Endothelial cell of umbilical vein (primary cell): ENCODE measurements at regions of chr3 and their contacts with region 1.

Region 1: GRCh38 chr3:157201648-157202278 is 41.8 kb upstream of the CCNL1 start:
- DNase-seq: peak; percentile 63
- H3K4me3 ChIP-seq: no peak overlapping the region
- H3K27ac ChIP-seq: no peak overlapping the region
- H3K4me1 ChIP-seq: peaks cover 14% of the 10 kb centered on the region
- H3K27me3 ChIP-seq: no peaks in the 10 kb centered on the region
- CTCF ChIP-seq: peak; percentile 40 to 41
- POLR2A ChIP-seq: no peak

Region 2: DNA sequence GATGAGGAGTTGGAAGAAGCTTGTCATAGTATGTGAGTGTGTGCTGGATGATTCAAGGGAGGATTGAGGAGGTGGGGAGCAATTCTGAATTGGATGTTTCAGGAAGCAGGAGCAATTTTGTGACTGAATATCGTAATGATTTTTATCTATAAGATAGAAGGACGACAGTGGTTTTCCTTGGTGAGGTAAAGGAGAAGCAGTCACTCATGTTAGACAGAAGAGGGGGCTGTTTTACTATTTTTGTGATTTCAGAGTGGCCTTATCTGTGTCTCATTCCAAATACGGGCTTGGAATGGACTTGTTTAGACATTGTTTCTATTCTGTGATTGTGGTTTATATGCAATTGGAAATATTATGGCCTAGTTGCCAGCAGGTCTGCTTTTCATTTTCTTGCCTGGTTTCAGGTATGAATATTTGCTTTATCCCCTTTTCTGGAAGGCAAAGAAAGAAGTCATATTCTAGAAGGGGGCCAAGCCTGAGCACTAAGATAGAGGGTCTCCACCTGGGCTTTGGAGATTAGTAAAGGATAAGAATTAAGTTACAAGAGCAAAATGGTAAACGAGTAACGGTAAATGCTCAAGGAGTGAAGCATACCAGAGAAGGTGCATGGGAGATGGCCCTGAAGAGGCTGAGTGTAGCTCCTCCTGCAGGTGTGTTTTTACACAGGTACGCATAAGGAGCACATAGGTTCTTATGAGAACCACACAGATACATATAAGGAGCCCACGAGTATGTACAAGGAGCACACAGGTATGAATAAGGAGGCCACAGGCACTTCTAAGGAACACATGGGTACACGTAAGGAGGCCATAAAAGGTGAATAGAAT is 1206.0 kb before region 1 on chr3:
- CTCF ChIA-PET with region 1: interaction called, 16 read pairs
- POLR2A ChIA-PET with region 1: no interaction called
- dilution Hi-C with region 1: no loop called
- intact Hi-C with region 1: loop called (anchors 5 kb)
- DNase-seq: peak; percentile 43
- H3K4me3 ChIP-seq: no peak overlapping the region
- H3K27ac ChIP-seq: no peak overlapping the region
- H3K4me1 ChIP-seq: no peaks in the 10 kb centered on the region
- H3K27me3 ChIP-seq: peaks cover 0 to 2% of the 10 kb centered on the region in 2 experiments
- CTCF ChIP-seq: peak; percentile 34 to 38
- POLR2A ChIP-seq: no peak

Region 3: GRCh38 chr3:157064402-157064801 is 137.4 kb before region 1 on chr3:
- CTCF ChIA-PET with region 1: no interaction called
- POLR2A ChIA-PET with region 1: no interaction called
- dilution Hi-C with region 1: no loop called
- intact Hi-C with region 1: no loop called
- DNase-seq: no peak
- H3K4me3 ChIP-seq: no peak overlapping the region
- H3K27ac ChIP-seq: no peak overlapping the region
- H3K4me1 ChIP-seq: no peaks in the 10 kb centered on the region
- H3K27me3 ChIP-seq: peaks cover 2 to 7% of the 10 kb centered on the region in 2 experiments
- CTCF ChIP-seq: no peak
- POLR2A ChIP-seq: no peak

Region 4: DNA sequence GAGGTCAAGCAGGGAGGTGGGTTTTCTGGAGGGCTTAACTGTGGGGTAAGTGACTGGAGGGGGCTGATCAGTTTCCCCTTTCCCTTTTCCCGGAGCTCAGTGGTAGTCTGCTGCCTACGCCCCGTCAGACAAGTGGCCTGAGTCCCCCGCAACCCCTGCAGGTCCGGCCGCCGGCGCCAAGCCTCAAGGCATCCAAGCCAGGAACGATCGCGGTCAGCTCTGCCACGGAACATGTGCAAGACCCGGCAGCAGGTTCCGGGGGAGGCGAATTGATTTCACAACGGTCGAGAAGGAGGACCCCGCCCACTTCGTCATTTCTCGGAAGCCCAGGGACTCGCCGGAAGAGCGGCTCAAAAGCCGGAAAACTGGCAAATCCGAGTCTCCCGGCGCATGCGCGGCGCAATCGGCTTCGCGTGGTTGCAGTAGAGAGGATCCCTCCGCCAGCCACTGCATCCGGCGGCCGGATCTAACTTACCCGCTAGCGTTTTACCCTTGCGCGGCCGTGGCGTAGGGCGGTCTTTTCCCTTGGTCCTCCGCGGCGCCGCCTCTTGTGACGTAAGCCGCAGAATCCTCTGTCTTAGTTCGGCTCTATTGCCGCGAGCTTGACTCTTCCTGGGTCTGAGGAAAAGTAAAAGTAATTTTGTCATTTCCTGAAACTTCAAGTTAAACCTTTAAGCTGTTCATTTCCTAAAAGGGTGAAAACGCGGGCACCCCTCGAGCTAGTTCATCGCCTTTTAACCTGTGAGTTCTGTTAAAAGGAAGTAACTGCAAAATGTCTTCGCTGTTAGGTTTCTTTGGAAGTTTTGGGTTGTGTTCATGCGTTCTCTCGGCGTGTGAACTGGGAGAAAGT is 26.9 kb before region 1 on chr3:
- CTCF ChIA-PET with region 1: interaction called, 39 read pairs
- POLR2A ChIA-PET with region 1: interaction called, 3 read pairs
- dilution Hi-C with region 1: no loop called
- intact Hi-C with region 1: loop called (anchors 1 kb)
- DNase-seq: peak; percentile 99
- H3K4me3 ChIP-seq: peak overlapping the region; percentile 37 to 97 (median 90)
- H3K27ac ChIP-seq: peak overlapping the region; percentile 98
- H3K4me1 ChIP-seq: peaks cover 16% of the 10 kb centered on the region
- H3K27me3 ChIP-seq: no peaks in the 10 kb centered on the region
- CTCF ChIP-seq: no peak
- POLR2A ChIP-seq: peak; percentile 95

Region 5: DNA sequence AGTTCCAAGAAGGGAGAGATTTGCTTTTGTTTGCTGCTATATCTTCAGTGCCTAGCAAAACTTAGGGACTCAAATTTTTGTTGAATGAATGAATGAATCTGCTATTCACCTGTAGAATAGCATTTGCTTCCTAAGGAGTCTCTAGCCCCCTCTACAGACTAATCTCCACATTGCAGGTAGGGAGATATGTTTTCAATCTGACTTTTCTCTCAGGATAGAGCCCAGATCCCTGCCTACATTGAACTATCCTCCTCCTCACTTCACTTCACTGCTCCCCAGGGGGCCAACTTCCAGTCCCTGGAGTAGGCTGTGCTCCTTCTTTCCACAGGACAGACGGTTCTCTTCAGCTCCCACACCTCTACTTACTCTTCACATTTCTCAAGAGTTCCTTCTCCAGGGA is 153.0 kb after region 1 on chr3:
- CTCF ChIA-PET with region 1: interaction called, 52 read pairs
- POLR2A ChIA-PET with region 1: no interaction called
- dilution Hi-C with region 1: no loop called
- intact Hi-C with region 1: loop called (anchors 1 kb)
- DNase-seq: peak; percentile 64
- H3K4me3 ChIP-seq: no peak overlapping the region
- H3K27ac ChIP-seq: peak overlapping the region; percentile 8
- H3K4me1 ChIP-seq: peaks cover 41% of the 10 kb centered on the region
- H3K27me3 ChIP-seq: no peaks in the 10 kb centered on the region
- CTCF ChIP-seq: peak; percentile 47 to 62
- POLR2A ChIP-seq: no peak

Region 6: DNA sequence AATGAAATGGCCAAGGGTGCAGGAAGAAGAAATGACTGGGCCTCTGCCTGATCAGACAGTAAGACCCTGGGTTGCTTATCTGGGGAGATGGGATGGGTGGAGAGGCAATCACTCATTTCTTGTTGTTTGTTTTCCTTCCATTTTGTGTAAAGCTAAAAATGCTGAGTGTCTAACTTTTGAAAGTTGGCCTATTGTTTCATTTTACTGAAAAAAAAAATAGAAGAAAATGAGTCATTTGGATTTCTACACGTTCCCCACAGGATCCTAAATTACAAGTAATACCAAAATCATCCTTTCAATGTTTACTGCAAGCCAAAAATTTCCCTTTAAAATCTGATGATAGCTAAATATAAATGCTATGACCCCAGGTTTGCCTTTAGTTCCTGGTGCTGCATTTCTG is 265.4 kb after region 1 on chr3:
- CTCF ChIA-PET with region 1: interaction called, 12 read pairs
- POLR2A ChIA-PET with region 1: no interaction called
- dilution Hi-C with region 1: no loop called
- intact Hi-C with region 1: no loop called
- DNase-seq: peak; percentile 79
- H3K4me3 ChIP-seq: no peak overlapping the region
- H3K27ac ChIP-seq: peak overlapping the region; percentile 47
- H3K4me1 ChIP-seq: peaks cover 24% of the 10 kb centered on the region
- H3K27me3 ChIP-seq: no peaks in the 10 kb centered on the region
- CTCF ChIP-seq: no peak
- POLR2A ChIP-seq: no peak

Region 7: DNA sequence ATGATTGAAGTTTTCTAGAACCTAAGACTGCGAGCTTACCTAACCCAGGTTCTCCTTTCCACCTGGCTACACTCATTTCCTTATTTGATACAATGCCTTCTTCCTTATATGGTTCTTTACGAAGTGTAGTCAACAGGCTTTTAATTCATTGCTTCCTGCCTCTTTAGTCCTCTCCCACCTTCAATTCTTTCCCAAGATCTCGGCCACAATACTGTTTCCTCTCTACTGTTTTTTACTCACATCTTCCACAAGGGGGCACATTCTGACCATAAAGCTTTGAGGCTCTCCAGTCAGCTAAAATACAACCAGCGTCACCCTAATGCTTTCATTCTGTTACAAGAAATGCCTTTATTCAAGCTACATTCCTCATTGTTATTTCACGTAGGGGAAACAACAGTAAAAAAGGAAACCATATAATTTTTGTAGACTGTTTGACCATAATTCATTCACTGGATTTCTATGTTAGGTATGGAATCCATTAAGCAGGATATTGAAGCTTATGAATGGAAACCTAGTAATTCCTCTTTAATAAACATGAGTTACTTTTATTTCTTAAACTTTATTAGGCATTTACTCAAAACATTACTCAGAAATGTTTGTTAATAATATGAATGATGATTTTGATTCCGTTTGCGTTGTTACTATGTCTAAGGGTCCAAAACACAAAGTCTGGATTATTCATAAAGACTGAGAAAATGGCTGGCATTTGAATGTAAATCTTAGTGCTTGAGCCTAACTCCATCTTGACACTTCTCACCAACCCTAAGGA is 330.9 kb after region 1 on chr3:
- CTCF ChIA-PET with region 1: interaction called, 65 read pairs
- POLR2A ChIA-PET with region 1: interaction called, 5 read pairs
- dilution Hi-C with region 1: no loop called
- intact Hi-C with region 1: loop called (anchors 1 kb)
- DNase-seq: peak; percentile 94
- H3K4me3 ChIP-seq: peak overlapping the region; percentile 40 to 96 (median 86)
- H3K27ac ChIP-seq: peak overlapping the region; percentile 100
- H3K4me1 ChIP-seq: peaks cover 67% of the 10 kb centered on the region
- H3K27me3 ChIP-seq: no peaks in the 10 kb centered on the region
- CTCF ChIP-seq: peak; percentile 61 to 68
- POLR2A ChIP-seq: peak; percentile 17